Heart left ventricle (tissue), 16 donors: ENCODE measurements at regions of chr15 and their contacts with region 1.

Region 1: GRCh38 chr15:27179789-27180188 is 208.8 kb downstream of the GABRG3 start:
- DNase-seq: no peak
- ATAC-seq: no peak
- H3K4me3 ChIP-seq: no peak overlapping the region
- H3K27ac ChIP-seq: no peak overlapping the region
- H3K4me1 ChIP-seq: no peaks in the 10 kb centered on the region
- H3K27me3 ChIP-seq: no peaks in the 10 kb centered on the region
- CTCF ChIP-seq: no peak
- POLR2A ChIP-seq: no peak

Region 2: DNA sequence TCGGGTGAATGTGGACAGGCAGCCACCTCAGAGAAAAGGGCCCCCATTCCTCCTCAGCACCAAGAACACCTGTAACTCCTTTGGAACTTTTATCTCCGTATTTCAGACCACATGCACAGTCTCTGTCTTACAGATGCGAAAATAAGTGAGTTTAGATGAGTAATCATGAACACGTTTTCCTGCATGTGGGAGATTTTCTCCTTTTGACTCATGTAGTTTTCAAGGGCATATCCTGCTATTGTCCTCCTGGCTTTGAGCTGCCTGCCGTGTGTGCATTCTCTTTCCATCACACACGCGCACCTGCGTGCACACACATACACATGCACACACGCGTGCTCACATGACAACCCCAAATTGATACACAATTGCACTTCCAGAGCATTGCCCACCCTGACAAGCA is 30.4 kb after region 1 on chr15:
- intact Hi-C with region 1: no loop called
- DNase-seq: no peak
- ATAC-seq: no peak
- H3K4me3 ChIP-seq: no peak overlapping the region
- H3K27ac ChIP-seq: no peak overlapping the region
- H3K4me1 ChIP-seq: no peaks in the 10 kb centered on the region
- H3K27me3 ChIP-seq: peaks cover 0 to 3% (median 0%) of the 10 kb centered on the region in 9 donors
- CTCF ChIP-seq: no peak
- POLR2A ChIP-seq: no peak

Region 3: DNA sequence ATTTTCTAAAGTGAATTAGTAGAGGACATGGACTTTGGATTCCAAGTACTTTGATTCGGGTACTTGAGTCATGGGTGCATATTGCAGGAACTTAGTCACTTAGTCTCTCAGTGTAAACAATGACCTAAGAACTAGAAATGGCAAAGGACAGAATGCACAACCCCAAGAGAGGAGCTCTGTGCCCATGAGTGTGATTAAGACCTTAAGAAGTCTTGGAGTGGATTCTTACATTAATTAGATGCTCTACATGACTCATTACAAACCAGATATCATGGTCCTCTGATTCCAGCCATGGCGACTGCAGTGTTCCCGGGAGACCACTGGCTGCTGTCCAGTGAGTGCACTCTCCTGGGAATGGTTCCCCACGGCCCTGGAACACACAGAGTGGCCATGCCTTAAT is 42.7 kb after region 1 on chr15:
- intact Hi-C with region 1: loop called in 1 of 10 experiments (anchors 10 kb)
- DNase-seq: no peak
- ATAC-seq: no peak
- H3K4me3 ChIP-seq: no peak overlapping the region
- H3K27ac ChIP-seq: no peak overlapping the region
- H3K4me1 ChIP-seq: peaks cover 0 to 7% (median 0%) of the 10 kb centered on the region in 12 donors
- H3K27me3 ChIP-seq: no peaks in the 10 kb centered on the region
- CTCF ChIP-seq: no peak
- POLR2A ChIP-seq: no peak